Right ventricle myocardium inferior (tissue), 1 donor: ENCODE measurements at regions of chr19 and their contacts with region 1.

Region 1: DNA sequence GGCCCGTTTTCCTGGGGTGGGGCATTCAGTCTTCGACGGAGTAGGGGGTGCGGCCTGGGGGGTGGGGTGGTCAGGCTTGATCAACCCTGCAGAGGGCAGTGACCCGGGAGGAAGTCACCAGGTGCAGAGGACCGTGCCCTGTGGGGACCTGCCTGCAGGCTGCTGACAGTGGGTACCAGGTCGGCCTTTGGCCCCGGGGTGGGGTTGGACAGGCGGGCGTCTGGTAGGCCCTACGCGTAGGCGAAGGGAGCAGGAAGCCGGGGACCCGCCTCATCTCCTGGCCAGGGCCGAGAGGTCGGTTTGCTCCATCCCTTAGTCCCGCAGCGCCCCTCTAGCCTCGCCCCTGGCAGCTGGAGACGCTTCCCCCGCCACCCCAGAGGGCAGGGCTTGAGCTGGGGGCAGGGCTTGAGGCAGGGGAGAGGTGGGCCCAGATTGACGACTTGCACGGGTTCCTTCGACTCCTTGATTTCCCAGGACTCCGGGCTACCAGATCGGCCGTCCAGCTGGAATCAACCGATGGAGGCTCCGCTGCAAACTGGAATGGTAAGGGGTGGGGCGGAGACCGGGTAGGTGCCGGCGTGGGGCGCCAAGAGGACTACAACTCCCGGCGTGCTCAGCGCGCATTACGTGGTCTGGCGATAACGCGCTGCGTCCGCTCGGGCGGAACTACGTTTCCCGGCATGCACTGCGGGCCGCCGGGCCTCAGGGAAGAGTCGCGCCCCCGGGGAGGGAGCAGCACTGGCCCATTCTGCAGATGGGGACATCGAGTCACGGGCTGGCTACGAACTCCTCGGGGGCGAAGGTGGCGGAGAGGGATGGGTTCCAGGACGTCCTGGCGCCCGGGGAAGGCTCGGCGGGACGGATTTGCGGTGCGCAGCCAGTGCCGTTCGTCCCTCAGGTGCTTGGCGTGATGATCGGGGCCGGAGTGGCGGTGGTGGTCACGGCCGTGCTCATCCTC is at the start of gene PNPLA6:
- DNase-seq: peak; percentile 98
- ATAC-seq: peak; percentile 84
- total RNA-seq, gene PNPLA6: 50.6 TPM

Region 2: DNA sequence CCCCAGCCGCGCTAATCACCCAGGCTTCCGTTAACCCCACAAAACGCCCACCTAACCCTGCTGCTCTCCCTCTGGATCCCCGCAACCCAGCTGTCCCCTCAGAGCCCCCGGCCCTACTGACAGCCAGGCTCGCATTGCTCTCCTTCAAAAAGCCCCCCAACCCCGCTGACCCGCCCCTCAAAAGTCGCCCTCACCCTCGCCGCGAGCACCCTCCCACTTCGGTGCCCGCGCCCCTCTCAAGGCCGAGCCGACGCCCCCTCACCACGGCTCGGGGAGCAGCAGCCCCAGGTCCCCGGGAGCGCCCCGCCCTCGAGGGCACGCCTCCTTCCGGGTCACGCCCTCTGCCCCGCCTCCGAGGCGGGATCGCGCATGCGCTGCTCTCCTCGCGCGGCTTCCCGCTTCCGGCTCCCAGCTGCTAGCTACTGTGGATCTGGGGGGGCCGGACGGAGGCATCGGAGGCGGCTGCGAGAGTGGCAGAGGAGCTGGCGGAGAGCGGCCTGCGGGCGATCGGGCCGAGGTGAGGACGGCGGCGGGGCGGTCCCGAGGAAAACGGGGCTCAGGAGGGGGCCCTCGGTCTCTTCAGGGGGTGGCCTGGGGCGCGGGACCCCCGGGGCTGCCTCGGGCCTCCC is 140.5 kb before region 1 on chr19:
- intact Hi-C with region 1: no loop called
- DNase-seq: peak; percentile 92
- ATAC-seq: peak; percentile 99

Region 3: GRCh38 chr19:7488736-7489353 is 46.5 kb before region 1 on chr19 and contains the start of gene PEX11G:
- intact Hi-C with region 1: loop called (anchors 5 kb)
- DNase-seq: peak; percentile 96
- ATAC-seq: peak; percentile 97
- total RNA-seq, gene PEX11G: 1.2 TPM

Region 4: DNA sequence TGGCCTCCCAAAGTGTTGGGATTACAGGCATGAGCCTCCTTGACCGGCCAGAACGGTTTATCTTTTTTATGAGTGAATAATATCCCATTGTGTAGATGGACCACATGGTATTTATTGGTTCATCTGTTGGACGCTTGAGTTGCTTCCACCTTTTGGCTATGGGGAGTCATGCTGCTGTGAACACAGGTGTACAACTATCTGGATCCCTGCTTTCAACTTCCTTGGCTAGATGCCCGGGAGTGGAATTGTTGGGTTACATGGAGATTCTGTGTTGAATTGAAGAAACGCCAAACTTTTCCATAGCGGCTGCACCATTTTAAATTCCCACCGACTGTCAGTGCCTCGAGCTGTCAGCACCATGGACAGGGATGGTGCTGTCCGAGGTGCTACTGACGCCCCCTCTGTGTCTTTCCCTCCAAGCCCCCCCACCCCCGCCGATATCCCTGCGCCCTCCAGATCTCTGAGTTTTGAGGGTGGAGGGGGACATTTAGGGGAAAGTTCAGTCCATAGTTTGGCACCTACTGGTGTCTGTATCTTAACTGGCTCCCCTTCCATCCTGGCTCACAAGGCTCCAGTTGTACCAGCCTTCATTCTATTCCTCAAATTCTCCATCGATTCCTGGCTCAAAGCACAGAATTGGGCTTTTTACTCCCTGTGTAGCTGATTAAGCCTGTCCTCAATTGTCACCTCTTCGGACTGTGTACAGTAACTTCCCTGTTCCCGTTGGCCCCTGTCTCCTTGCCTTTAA is 27.5 kb after region 1 on chr19:
- intact Hi-C with region 1: no loop called
- DNase-seq: no peak
- ATAC-seq: no peak

Region 5: GRCh38 chr19:7590261-7590660 is 54.9 kb after region 1 on chr19:
- intact Hi-C with region 1: no loop called
- DNase-seq: no peak
- ATAC-seq: no peak

Region 6: GRCh38 chr19:7629347-7630054 is 94.2 kb after region 1 on chr19 and contains the starts of genes PET100 and XAB2:
- intact Hi-C with region 1: loop called (anchors 5 kb)
- DNase-seq: peak; percentile 97
- ATAC-seq: peak; percentile 98
- total RNA-seq, gene PET100: 205 TPM
- total RNA-seq, gene XAB2: 25.3 TPM